Sigmoid colon (tissue), 7 donors: ENCODE measurements at regions of chr16 and their contacts with region 1.

Region 1: GRCh38 chr16:15671530-15672117 is 21.6 kb downstream of the NDE1 start:
- DNase-seq: no peak
- H3K4me3 ChIP-seq: no peak overlapping the region
- H3K27ac ChIP-seq: peak overlapping the region; percentile 78 to 88 (median 86)
- H3K4me1 ChIP-seq: peaks cover 0 to 23% (median 19%) of the 10 kb centered on the region in 4 donors
- H3K27me3 ChIP-seq: no peaks in the 10 kb centered on the region
- CTCF ChIP-seq: no peak
- EP300 ChIP-seq: no peak
- POLR2A ChIP-seq: no peak

Region 2: GRCh38 chr16:15658149-15658548 is 13.5 kb before region 1 on chr16:
- intact Hi-C with region 1: loop called (anchors 1 kb)
- DNase-seq: peak; percentile 40
- H3K4me3 ChIP-seq: no peak overlapping the region
- H3K27ac ChIP-seq: no peak overlapping the region
- H3K4me1 ChIP-seq: peaks cover 0 to 39% (median 18%) of the 10 kb centered on the region in 4 donors
- H3K27me3 ChIP-seq: no peaks in the 10 kb centered on the region
- CTCF ChIP-seq: no peak
- EP300 ChIP-seq: no peak
- POLR2A ChIP-seq: no peak